Dorsolateral prefrontal cortex (tissue), 120 donors: ENCODE measurements at regions of chr5 and their contacts with region 1.

Region 1: DNA sequence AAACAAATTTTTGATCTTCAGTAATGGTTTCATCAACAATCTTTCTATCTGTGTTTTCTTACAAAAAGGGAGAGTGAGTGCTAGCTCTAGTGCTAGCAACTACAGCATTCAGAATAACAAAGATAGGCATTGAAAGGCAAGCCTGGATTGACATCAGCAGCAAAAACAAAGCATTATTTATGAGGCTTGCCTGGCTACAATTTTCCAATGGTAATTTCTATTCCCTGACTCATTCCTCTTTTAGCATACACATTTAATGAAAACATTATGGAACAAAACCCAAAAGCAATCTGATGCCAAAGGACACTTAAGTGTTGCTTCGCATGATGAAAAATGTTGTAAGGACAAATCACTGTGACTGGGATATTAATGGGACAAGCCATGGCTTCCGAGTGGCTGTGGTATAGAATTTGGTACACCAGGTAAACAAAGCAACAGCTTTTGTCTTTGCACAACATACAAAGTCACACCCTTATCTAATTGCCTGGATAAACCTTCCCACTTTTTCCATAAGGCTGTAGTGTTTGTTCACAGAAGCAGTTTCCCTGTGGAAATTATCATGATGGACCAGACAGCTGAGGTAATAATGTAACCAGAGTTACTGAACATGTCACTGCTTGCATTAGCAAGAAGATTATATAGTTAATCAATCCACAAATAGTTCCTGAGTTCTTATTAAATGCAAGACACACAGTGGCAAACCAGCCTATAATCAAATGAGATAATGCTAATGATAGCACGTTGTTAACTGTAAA is 179.8 kb upstream of the EDIL3 start:
- DNase-seq: no peak
- H3K4me3 ChIP-seq: peak overlapping the region in 18 of 59 donors; percentile 1 to 45 (median 18)
- H3K27ac ChIP-seq: peak overlapping the region; percentile 2 to 100 (median 97)
- H3K27me3 ChIP-seq: no peaks in the 10 kb centered on the region
- CTCF ChIP-seq: peak in 5 of 56 donors; percentile 9 to 26 (median 15)

Region 2: GRCh38 chr5:84647581-84647980 is 83.1 kb after region 1 on chr5:
- intact Hi-C with region 1: loop called in 1 of 2 experiments (anchors 5 kb)
- DNase-seq: no peak
- H3K4me3 ChIP-seq: peak overlapping the region in 5 of 59 donors; percentile 1 to 41 (median 21)
- H3K27ac ChIP-seq: peak overlapping the region in 49 of 59 donors; percentile 4 to 84 (median 50)
- H3K27me3 ChIP-seq: no peaks in the 10 kb centered on the region
- CTCF ChIP-seq: no peak

Region 3: GRCh38 chr5:84696651-84697050 is 132.2 kb after region 1 on chr5:
- intact Hi-C with region 1: loop called in 1 of 2 experiments (anchors 10 kb)
- DNase-seq: no peak
- H3K4me3 ChIP-seq: no peak overlapping the region
- H3K27ac ChIP-seq: no peak overlapping the region
- H3K27me3 ChIP-seq: no peaks in the 10 kb centered on the region
- CTCF ChIP-seq: no peak